ENCODE measurements at regions of chr2 and their contacts with region 1.

Region 1: GRCh38 chr2:171086352-171087290 is 74.1 kb downstream of the TLK1 start:
- DNase-seq: peak in 8 of 9 donors; percentile 34 to 76 (median 71)
- ATAC-seq: peak; percentile 82
- H3K4me3 ChIP-seq: peak overlapping the region; percentile 34
- H3K4me3 Mint-ChIP-seq: peak overlapping the region; percentile 69 to 92 (median 82)
- H3K27ac ChIP-seq: peak overlapping the region; percentile 71
- H3K27ac Mint-ChIP-seq: peak overlapping the region; percentile 86 to 99 (median 95)
- H3K4me1 ChIP-seq: peaks cover 7 to 68% of the 10 kb centered on the region in 2 donors
- H3K4me1 Mint-ChIP-seq: peaks cover 45 to 86% (median 76%) of the 10 kb centered on the region in 7 donors
- H3K27me3 ChIP-seq: no peaks in the 10 kb centered on the region
- H3K27me3 Mint-ChIP-seq: no peaks in the 10 kb centered on the region

Region 2: DNA sequence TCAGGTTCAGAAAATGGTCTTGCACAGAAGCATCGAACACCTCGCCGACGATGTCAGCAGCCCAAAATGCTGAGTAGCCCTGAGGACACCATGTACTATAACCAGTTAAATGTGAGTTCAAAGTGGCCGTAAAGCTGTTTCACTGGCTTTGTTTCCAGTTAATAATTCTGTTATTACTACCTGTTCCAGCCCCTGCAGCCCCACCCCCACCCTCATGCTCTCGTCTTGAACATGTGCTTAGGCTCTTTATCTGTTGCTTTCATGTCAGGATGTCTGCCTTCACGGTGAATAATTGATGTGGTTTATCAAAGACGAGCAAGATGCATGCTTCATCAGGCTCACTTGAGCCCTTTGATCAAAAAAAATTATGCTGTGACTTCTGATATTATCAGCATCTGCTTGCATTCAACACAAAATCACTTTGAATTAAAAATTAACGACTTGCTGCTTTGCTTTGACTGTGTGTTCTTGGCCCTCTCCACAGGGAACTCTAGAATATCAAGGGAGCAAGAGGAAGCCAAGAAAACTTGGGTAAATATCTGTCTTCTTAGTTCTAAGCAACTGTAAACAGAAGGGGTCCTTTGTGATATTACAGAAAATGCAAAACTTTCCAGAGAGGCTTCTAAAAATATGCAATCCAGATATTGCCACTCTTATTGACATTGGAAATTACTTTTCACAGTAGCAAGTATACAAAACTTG is 434.8 kb before region 1 on chr2:
- CTCF ChIA-PET with region 1: no interaction called
- POLR2A ChIA-PET with region 1: no interaction called
- intact Hi-C with region 1: no loop called
- DNase-seq: peak in 7 of 9 donors; percentile 74 to 89 (median 84)
- ATAC-seq: peak; percentile 99
- H3K4me3 ChIP-seq: no peak overlapping the region
- H3K4me3 Mint-ChIP-seq: peak overlapping the region; percentile 44 to 80 (median 64)
- H3K27ac ChIP-seq: no peak overlapping the region
- H3K27ac Mint-ChIP-seq: peak overlapping the region in 7 of 9 donors; percentile 12 to 87 (median 25)
- H3K4me1 ChIP-seq: peaks cover 11 to 23% of the 10 kb centered on the region in 2 donors
- H3K4me1 Mint-ChIP-seq: peaks cover 17 to 35% (median 32%) of the 10 kb centered on the region in 7 donors
- H3K27me3 ChIP-seq: no peaks in the 10 kb centered on the region
- H3K27me3 Mint-ChIP-seq: peaks cover 0 to 20% (median 9%) of the 10 kb centered on the region in 5 donors

Region 3: DNA sequence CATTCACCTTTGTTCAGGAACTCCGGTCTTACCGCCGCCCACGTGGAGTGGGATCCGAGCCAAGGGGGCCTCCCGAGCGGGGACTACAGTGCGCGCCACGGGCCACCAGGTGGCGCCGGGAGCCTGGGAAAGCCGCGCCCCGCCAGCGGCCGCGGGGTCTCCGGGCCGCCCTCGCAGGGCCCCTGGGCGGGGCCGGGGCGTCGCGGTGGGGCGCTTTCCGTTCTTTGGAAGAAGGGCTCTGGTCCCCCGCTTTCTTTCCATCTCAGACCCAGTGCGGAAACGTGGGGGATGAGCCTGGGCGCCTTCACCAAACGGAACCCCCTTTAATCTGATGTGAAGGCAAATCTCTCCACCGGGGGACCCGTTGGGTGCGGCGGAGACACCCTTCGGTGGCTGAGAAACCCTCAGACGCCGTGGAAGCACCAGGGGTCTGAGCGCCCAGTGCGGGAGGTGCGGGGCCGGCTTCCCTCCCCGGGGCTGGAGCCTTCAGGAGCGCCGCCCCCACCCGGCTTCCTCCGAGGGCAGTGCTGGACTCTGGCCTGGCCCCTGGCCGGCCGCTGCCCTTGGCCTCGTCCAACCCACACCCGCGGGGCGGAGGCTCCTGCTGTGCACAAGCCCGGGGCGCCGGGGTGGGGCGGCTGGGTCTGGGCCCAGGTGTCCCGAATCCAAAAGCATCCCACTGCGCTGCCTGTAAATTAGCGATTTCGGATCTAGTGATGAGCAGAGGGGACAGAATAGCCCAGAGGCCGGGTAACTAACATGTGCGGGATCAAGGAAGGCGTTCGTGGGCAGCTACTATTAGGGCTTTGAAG is 112.9 kb before region 1 on chr2:
- CTCF ChIA-PET with region 1: interaction called, 20 read pairs
- POLR2A ChIA-PET with region 1: interaction called, 8 read pairs
- intact Hi-C with region 1: loop called (anchors 1 kb)
- DNase-seq: peak; percentile 86 to 96 (median 91)
- ATAC-seq: peak; percentile 99
- H3K4me3 ChIP-seq: peak overlapping the region; percentile 84
- H3K4me3 Mint-ChIP-seq: peak overlapping the region; percentile 51 to 87 (median 84)
- H3K27ac ChIP-seq: peak overlapping the region; percentile 67
- H3K27ac Mint-ChIP-seq: peak overlapping the region; percentile 33 to 90 (median 79)
- H3K4me1 ChIP-seq: peaks cover 4 to 11% of the 10 kb centered on the region in 2 donors
- H3K4me1 Mint-ChIP-seq: peaks cover 5 to 20% (median 10%) of the 10 kb centered on the region in 7 donors
- H3K27me3 ChIP-seq: no peaks in the 10 kb centered on the region
- H3K27me3 Mint-ChIP-seq: no peaks in the 10 kb centered on the region

Region 4: GRCh38 chr2:171009386-171009785 is 77.2 kb before region 1 on chr2:
- CTCF ChIA-PET with region 1: interaction called, 11 read pairs
- POLR2A ChIA-PET with region 1: interaction called, 5 read pairs
- intact Hi-C with region 1: loop called in 1 of 2 experiments (anchors 10 kb)
- DNase-seq: no peak
- ATAC-seq: no peak
- H3K4me3 ChIP-seq: no peak overlapping the region
- H3K4me3 Mint-ChIP-seq: no peak overlapping the region
- H3K27ac ChIP-seq: no peak overlapping the region
- H3K27ac Mint-ChIP-seq: peak overlapping the region in 4 of 9 donors; percentile 10 to 78 (median 42)
- H3K4me1 ChIP-seq: no peaks in the 10 kb centered on the region
- H3K4me1 Mint-ChIP-seq: peaks cover 0 to 20% (median 11%) of the 10 kb centered on the region in 7 donors
- H3K27me3 ChIP-seq: no peaks in the 10 kb centered on the region
- H3K27me3 Mint-ChIP-seq: no peaks in the 10 kb centered on the region

Region 5: DNA sequence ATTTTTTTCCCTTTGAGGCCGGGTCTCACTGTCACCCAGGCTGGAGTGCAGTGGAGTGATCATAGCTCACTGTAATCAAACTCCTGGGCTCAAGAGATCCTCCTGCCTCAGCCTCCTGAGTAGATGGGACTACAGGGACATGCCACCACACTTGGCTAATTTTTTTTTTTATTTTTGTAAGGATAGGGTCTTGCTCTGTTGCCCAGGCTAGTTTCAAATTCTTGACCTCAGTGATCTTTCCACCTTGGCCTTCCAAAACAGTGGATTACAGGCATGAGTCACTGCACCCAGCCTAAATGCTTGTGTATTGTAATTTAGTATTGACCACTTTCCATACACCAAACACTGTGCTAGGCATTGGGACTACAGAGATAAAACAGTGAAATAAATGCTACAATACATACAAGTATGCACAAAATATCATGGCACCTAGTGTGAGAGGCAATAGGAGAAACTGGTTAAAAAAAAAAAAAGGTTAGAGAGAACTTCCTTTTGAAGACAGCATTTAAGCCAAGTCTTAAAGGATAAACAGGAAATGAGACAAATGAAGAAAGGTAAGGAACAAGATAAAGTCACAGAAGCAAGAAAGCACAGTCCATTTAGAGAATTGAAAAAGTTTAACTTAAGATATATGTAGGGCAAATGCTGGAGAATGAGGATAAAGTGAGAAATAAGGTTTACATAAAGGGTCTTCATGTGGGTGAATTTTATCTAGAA is 44.2 kb before region 1 on chr2:
- CTCF ChIA-PET with region 1: interaction called, 6 read pairs
- POLR2A ChIA-PET with region 1: interaction called, 7 read pairs
- intact Hi-C with region 1: loop called (anchors 1 to 2 kb)
- DNase-seq: peak in 6 of 9 donors; percentile 30 to 55 (median 44)
- ATAC-seq: peak; percentile 42
- H3K4me3 ChIP-seq: no peak overlapping the region
- H3K4me3 Mint-ChIP-seq: peak overlapping the region in 9 of 10 donors; percentile 26 to 86 (median 59)
- H3K27ac ChIP-seq: peak overlapping the region; percentile 43
- H3K27ac Mint-ChIP-seq: peak overlapping the region; percentile 85 to 97 (median 95)
- H3K4me1 ChIP-seq: peaks cover 6 to 30% of the 10 kb centered on the region in 2 donors
- H3K4me1 Mint-ChIP-seq: peaks cover 23 to 51% (median 40%) of the 10 kb centered on the region in 7 donors
- H3K27me3 ChIP-seq: no peaks in the 10 kb centered on the region
- H3K27me3 Mint-ChIP-seq: no peaks in the 10 kb centered on the region

Region 6: GRCh38 chr2:171069286-171069956 is 17.2 kb before region 1 on chr2:
- CTCF ChIA-PET with region 1: interaction called, 3 read pairs
- POLR2A ChIA-PET with region 1: interaction called, 5 read pairs
- intact Hi-C with region 1: loop called in 1 of 2 experiments (anchors 1 kb)
- DNase-seq: no peak
- ATAC-seq: no peak
- H3K4me3 ChIP-seq: no peak overlapping the region
- H3K4me3 Mint-ChIP-seq: no peak overlapping the region
- H3K27ac ChIP-seq: no peak overlapping the region
- H3K27ac Mint-ChIP-seq: peak overlapping the region in 2 of 9 donors; percentile 25 to 62
- H3K4me1 ChIP-seq: no peaks in the 10 kb centered on the region
- H3K4me1 Mint-ChIP-seq: peaks cover 3 to 29% (median 27%) of the 10 kb centered on the region in 7 donors
- H3K27me3 ChIP-seq: no peaks in the 10 kb centered on the region
- H3K27me3 Mint-ChIP-seq: no peaks in the 10 kb centered on the region

Region 7: GRCh38 chr2:171154348-171154747 is 67.7 kb after region 1 on chr2:
- CTCF ChIA-PET with region 1: interaction called, 41 read pairs
- POLR2A ChIA-PET with region 1: interaction called, 32 read pairs
- intact Hi-C with region 1: loop called (anchors 1 kb)
- DNase-seq: no peak
- ATAC-seq: no peak
- H3K4me3 ChIP-seq: no peak overlapping the region
- H3K4me3 Mint-ChIP-seq: peak overlapping the region in 7 of 10 donors; percentile 0 to 95 (median 53)
- H3K27ac ChIP-seq: no peak overlapping the region
- H3K27ac Mint-ChIP-seq: peak overlapping the region in 6 of 9 donors; percentile 33 to 65 (median 48)
- H3K4me1 ChIP-seq: peaks cover 28% of the 10 kb centered on the region in 2 donors
- H3K4me1 Mint-ChIP-seq: peaks cover 62 to 97% (median 82%) of the 10 kb centered on the region in 7 donors
- H3K27me3 ChIP-seq: no peaks in the 10 kb centered on the region
- H3K27me3 Mint-ChIP-seq: no peaks in the 10 kb centered on the region

Region 8: GRCh38 chr2:171416009-171416926 is 329.6 kb after region 1 on chr2:
- CTCF ChIA-PET with region 1: interaction called, 5 read pairs
- POLR2A ChIA-PET with region 1: no interaction called
- intact Hi-C with region 1: loop called (anchors 1 kb)
- DNase-seq: peak; percentile 29 to 82 (median 75)
- ATAC-seq: peak; percentile 99
- H3K4me3 ChIP-seq: no peak overlapping the region
- H3K4me3 Mint-ChIP-seq: no peak overlapping the region
- H3K27ac ChIP-seq: no peak overlapping the region
- H3K27ac Mint-ChIP-seq: peak overlapping the region; percentile 4 to 74 (median 55)
- H3K4me1 ChIP-seq: no peaks in the 10 kb centered on the region
- H3K4me1 Mint-ChIP-seq: peaks cover 6 to 22% (median 7%) of the 10 kb centered on the region in 7 donors
- H3K27me3 ChIP-seq: no peaks in the 10 kb centered on the region
- H3K27me3 Mint-ChIP-seq: no peaks in the 10 kb centered on the region

Measured in naive thymus-derived CD4-positive, alpha-beta T cell (primary cell).